ENCODE measurements at regions of chr14 and their contacts with region 1.

Region 1: DNA sequence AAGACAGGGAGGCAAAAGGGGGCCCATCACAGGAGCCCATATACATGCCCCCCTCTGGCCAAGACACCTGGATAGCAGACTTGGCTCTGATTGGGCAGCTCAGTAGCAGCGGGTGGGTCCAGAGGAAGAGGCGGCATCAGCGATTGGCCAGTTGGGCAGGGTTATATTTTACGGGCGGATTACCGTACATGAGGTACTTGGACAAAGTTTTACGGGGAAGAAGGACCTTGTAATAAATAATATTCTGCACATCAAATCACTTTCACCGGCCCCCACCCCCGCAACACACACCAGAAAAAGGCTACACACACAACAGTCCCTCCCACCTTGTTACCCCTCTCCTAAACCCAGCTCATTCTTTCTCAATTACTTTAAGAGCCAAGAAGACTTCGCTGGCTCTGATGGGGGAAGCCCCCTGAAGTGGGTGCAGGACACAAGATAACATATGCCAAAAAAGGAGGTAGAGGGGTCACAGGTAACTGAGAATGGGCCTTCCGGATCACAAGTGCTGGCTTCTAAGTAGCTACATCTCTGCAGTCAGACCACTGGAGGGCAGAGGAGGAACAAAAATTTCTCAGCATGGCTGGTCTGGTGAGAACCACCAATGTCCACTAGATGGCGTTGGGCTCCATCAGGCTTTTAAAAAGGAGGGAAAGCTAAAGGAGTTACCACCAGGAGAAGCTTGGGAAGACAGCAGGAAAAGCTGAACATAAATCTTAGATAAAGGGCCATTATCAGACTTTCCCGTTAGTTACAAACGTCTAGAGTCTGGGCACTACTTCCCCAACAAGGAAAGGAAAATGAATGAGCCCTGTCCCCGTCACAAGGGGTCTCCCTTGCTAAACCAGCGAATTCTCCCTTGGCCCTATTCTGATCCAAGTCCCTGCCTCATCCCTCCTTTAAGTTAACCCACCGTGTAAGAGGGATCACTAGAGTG is 11.4 kb upstream of the CDH24 start:
- DNase-seq: peak; percentile 77 to 91 (median 82)
- ATAC-seq: peak; percentile 80
- H3K4me3 ChIP-seq: no peak overlapping the region
- H3K27ac ChIP-seq: peak overlapping the region; percentile 17; the same call in 1 of the 3 replicates
- H3K4me1 ChIP-seq: peaks cover 20 to 26% of the 10 kb centered on the region in 2 experiments
- H3K27me3 ChIP-seq: no peaks in the 10 kb centered on the region
- CTCF ChIP-seq: peak; percentile 99 to 100 (median 100)
- EP300 ChIP-seq: no peak
- POLR2A ChIP-seq: no peak
- RAD21 ChIP-seq: peak; percentile 84 to 91

Region 2: DNA sequence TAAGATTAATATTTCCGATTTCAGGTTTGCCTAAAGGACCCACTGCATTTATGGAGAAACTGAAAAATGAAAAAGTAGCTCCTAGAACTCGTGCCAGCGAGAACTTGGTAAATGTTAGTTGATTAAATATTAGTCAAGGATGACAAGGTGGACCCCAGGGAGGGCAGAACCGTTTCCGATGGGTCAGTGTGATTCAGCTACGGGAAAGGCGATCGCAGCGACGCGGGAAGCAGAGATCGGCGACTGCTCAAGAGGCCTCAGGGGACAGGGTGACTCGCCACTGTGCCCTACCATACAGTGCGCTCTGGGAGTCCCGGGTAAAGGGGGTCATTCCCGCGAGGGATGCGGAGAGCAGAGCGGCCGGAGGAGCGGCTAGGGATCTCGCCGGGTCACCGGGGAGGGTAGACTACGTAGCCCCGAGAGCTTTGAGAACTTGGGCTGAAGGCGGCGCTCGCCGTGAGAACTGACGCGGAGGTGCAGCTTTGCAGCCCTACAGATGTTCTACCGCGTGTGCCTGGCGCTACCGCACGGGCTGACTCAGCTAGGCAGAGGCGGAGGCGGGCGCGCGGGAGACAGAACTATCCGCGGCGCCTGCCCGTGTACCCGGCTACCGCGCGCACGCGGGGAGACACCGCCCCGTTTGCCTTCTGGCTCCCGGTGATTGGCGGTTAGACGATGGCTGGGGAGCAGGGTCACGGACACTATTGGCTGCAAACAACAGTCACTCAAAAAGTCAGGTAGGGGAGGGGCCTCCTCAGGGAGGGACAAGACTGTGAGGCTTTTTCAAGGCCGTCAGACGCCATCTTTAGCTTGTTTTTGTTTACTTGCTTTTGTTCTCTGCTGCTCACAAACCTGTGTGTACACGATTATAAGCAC is 62.0 kb before region 1 on chr14:
- CTCF ChIA-PET with region 1: no interaction called
- POLR2A ChIA-PET with region 1: interaction called, 10 read pairs
- in situ Hi-C with region 1: no loop called
- intact Hi-C with region 1: no loop called
- DNase-seq: peak; percentile 97 to 99 (median 99)
- ATAC-seq: peak; percentile 94
- H3K4me3 ChIP-seq: peak overlapping the region; percentile 43
- H3K27ac ChIP-seq: peak overlapping the region; percentile 97
- H3K4me1 ChIP-seq: peaks cover 20 to 34% of the 10 kb centered on the region in 2 experiments
- H3K27me3 ChIP-seq: no peaks in the 10 kb centered on the region
- CTCF ChIP-seq: peak; percentile 38 to 49 (median 45); a peak in 5 of 6 replicates
- EP300 ChIP-seq: 0 out of 2 replicates have a peak, but pooled peaks have one; percentile 4
- POLR2A ChIP-seq: peak; percentile 93
- RAD21 ChIP-seq: peak in 1 of 2 experiments; percentile 35; a peak in 2 of 4 replicates

Region 3: GRCh38 chr14:23085458-23085857 is 16.7 kb after region 1 on chr14:
- CTCF ChIA-PET with region 1: no interaction called
- POLR2A ChIA-PET with region 1: interaction called, 12 read pairs
- in situ Hi-C with region 1: no loop called
- intact Hi-C with region 1: no loop called
- DNase-seq: no peak
- ATAC-seq: no peak
- H3K4me3 ChIP-seq: no peak overlapping the region
- H3K27ac ChIP-seq: no peak overlapping the region
- H3K4me1 ChIP-seq: no peaks in the 10 kb centered on the region
- H3K27me3 ChIP-seq: no peaks in the 10 kb centered on the region
- CTCF ChIP-seq: no peak
- EP300 ChIP-seq: no peak
- POLR2A ChIP-seq: no peak
- RAD21 ChIP-seq: no peak

Region 4: DNA sequence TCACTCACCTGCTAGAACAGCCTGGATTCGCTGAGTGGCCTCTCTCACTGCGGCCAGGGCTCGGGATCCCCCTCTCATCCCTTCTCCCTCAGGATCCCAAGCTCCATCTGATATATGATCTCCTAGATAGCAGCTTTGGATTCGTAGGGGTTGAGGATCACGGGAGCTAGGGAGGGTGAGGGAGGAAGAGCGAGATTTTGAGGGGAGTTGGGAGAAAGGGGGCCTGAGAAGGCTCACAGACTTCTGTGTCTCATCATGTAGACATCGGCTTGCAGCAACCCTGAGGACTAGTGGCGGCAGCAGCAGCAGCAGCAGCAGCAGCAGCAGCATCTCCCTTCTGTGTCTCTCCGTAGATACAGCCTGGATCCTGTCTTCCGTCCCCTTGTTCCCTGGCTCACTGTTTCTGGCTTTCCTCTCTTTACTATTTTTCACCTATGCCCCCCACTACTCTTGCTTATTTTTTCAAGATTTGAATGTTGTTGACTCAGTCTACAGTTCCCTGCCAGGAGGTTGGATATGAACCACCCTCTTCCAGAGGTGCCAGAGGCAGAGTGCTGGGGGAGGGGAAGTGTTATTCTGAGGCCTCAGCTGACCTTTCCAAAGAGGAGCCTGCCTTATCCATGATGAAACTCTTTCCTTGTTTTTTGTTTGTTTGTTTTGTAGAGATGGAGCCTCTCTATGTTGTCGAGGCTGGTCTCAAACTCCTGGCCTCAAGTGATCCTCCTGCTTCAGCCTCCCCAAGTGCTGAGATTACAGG is 36.0 kb after region 1 on chr14 and contains the start of gene CIROP:
- CTCF ChIA-PET with region 1: interaction called, 109 read pairs
- POLR2A ChIA-PET with region 1: interaction called, 6 read pairs
- in situ Hi-C with region 1: loop called (anchors 5 kb)
- intact Hi-C with region 1: loop called (anchors 1 kb)
- DNase-seq: peak in 1 of 4 experiments; percentile 6
- ATAC-seq: no peak
- H3K4me3 ChIP-seq: no peak within 1 kb of the TSS
- H3K27ac ChIP-seq: no peak within 1 kb of the TSS
- H3K4me1 ChIP-seq: peaks cover 4 to 8% of the 10 kb centered on the region in 2 experiments; a peak in 4 of 5 replicates
- H3K27me3 ChIP-seq: no peaks in the 10 kb centered on the region
- CTCF ChIP-seq: no peak
- EP300 ChIP-seq: no peak
- POLR2A ChIP-seq: no peak
- RAD21 ChIP-seq: no peak
- polyA plus RNA-seq, gene CIROP: not detected

Region 5: DNA sequence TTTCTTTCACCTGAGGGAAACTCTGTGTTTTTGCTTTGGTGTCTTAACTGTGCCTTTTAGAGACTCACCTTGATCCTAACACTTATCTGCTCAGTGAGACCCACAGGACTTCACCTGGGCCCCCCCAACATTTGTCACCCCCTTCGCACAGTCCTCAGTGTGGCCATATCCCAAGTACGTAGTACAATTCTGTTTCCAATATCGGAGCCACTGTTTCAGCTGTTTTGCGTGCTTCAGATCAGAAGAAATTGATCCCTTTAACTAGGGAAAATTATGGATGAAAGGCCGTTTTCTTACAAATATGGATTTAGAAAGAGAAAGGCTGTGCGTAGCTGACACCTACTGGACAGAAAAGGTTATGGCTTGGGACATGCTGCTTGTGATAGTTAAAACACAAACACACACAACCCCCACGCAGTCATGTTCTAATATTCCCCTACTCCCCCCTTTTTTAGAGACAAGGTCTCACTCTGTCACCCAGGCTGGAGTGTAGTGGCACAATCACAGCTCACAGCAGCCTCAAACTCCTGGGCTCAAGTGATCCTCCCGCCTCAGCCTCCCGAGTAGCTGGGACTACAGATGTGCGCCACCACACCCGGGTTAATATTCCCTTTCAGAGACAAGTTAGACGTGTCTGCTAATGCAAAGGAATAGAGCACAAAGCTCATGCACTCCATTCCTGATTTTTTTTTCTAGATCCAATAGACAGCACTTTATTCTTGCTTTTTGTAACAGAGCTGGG is 118.3 kb after region 1 on chr14:
- CTCF ChIA-PET with region 1: interaction called, 10 read pairs
- POLR2A ChIA-PET with region 1: no interaction called
- in situ Hi-C with region 1: no loop called
- intact Hi-C with region 1: loop called (anchors 1 kb)
- DNase-seq: peak; percentile 68 to 81 (median 70)
- ATAC-seq: peak; percentile 89
- H3K4me3 ChIP-seq: no peak overlapping the region
- H3K27ac ChIP-seq: no peak overlapping the region; the same call in 2 of the 3 replicates
- H3K4me1 ChIP-seq: peaks cover 11 to 12% of the 10 kb centered on the region in 2 experiments; a peak in 4 of 5 replicates
- H3K27me3 ChIP-seq: no peaks in the 10 kb centered on the region
- CTCF ChIP-seq: peak; percentile 87 to 97 (median 93)
- EP300 ChIP-seq: no peak
- POLR2A ChIP-seq: no peak
- RAD21 ChIP-seq: peak; percentile 99 to 100